Activated T-helper 1 cell treated with anti-CD3 and anti-CD28 coated beads, Interleukin-12 subunit alpha, Interleukin-12 subunit beta, Interleukin-2, Interleukin-4 antibody, amounts not matched to agents 30 ng/mL and 10 ng/mL and 1 ng/mL, durations not matched to agents 14 hours and 24 hours and 36 hours (primary cell): ENCODE measurements at regions of chr6 and their contacts with region 1.

Region 1: DNA sequence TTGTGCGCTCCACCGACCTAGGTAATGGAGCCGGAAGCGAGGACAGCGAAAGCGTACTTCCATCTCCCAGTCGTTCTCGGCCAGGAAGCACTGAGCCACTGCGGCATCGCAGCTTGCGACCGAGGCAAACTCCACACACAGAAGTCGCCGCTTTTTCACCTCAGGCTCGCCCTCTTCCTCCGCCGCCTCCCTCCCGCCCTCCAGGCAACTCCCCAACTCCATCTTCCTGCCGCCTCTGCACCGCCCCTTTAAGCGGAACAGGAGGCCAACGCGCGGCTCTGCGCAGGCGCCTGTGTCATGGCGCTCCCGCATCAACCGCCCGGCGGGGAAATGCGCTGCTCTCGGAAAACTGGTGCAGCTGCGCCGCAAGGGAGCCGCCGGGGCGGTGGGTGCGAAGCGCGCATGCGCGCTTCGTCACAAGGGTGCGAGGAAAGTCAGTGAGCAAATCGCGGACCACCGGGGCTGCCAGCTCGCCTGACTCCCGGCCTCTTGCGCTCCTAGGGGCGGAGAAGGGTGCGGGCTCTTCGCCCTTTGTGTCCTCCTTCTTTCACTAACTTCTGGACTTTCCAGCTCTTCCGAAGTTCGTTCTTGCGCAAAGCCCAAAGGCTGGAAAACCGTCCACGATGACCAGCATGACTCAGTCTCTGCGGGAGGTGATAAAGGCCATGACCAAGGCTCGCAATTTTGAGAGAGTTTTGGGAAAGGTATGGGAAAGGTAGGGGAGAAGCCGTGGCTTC is at the starts of genes ACOT13 and TDP2:
- DNase-seq: peak; percentile 97
- H3K4me3 Mint-ChIP-seq: peak within 1 kb of the TSS; percentile 92
- H3K27ac Mint-ChIP-seq: peak within 1 kb of the TSS; percentile 99
- H3K4me1 Mint-ChIP-seq: peaks cover 61% of the 10 kb centered on the region
- H3K27me3 Mint-ChIP-seq: no peaks in the 10 kb centered on the region
- total RNA-seq, gene ACOT13: 27.0 and 27.4 TPM in 2 replicates
- total RNA-seq, gene TDP2: 46.1 and 47.4 TPM in 2 replicates

Region 2: DNA sequence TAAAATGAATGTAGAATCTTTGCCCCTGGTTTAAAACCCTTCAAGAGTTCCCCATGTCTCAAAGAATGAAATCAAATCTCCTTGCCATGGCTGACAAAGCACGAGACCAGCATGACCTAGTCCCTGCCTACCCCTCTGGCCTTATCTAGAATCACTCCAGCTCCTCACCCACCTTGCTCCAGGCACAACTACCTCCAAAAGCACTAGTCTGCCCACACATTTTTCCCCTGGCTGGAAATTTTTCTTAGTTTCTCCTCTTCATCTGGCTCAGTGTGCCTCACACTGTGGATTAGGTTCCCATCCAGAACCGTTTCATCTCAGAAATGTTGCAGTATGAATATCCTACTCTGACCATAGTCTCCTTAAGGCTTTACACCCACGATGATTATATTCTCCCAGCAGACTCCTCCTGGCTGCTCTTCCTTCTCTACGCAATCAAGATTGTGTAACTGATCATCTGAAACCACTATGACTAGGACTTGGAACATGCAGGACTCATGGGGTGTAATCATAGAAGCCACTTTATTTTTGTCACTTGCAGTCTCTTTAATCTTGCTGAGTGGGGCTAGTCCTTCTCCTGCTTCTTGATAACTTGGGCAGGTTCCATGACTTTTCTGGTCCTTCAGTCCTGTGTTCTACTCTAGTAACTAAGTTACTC is 271.9 kb before region 1 on chr6:
- intact Hi-C with region 1: no loop called
- DNase-seq: no peak
- H3K4me3 Mint-ChIP-seq: no peak overlapping the region
- H3K27ac Mint-ChIP-seq: no peak overlapping the region
- H3K4me1 Mint-ChIP-seq: no peaks in the 10 kb centered on the region
- H3K27me3 Mint-ChIP-seq: peaks cover 12% of the 10 kb centered on the region

Region 3: DNA sequence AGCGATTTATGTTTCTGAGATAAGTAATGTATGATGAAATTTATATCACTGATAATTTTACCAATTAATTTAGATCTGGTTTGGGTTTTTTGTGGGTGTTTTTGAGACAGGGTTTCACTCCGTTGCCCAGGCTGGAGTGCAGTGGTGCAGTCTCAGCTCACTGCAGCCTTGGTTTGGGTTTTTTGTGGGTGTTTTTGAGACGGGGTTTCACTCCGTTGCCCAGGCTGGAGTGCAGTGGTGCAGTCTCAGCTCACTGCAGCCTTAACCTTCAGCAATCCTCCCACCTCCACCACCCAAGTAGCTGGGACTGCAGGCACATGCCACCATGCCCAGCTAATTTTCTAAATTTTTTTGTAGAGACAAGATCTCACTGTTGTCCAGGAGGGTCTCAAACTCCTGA is 251.1 kb before region 1 on chr6:
- intact Hi-C with region 1: no loop called
- DNase-seq: no peak
- H3K4me3 Mint-ChIP-seq: no peak overlapping the region
- H3K27ac Mint-ChIP-seq: no peak overlapping the region
- H3K4me1 Mint-ChIP-seq: no peaks in the 10 kb centered on the region
- H3K27me3 Mint-ChIP-seq: no peaks in the 10 kb centered on the region

Region 4: GRCh38 chr6:24646782-24647181 is 20.0 kb before region 1 on chr6:
- intact Hi-C with region 1: loop called (anchors 1 kb)
- DNase-seq: no peak
- H3K4me3 Mint-ChIP-seq: peak overlapping the region; percentile 86
- H3K27ac Mint-ChIP-seq: peak overlapping the region; percentile 72
- H3K4me1 Mint-ChIP-seq: peaks cover 18% of the 10 kb centered on the region
- H3K27me3 Mint-ChIP-seq: peaks cover 20% of the 10 kb centered on the region

Region 5: DNA sequence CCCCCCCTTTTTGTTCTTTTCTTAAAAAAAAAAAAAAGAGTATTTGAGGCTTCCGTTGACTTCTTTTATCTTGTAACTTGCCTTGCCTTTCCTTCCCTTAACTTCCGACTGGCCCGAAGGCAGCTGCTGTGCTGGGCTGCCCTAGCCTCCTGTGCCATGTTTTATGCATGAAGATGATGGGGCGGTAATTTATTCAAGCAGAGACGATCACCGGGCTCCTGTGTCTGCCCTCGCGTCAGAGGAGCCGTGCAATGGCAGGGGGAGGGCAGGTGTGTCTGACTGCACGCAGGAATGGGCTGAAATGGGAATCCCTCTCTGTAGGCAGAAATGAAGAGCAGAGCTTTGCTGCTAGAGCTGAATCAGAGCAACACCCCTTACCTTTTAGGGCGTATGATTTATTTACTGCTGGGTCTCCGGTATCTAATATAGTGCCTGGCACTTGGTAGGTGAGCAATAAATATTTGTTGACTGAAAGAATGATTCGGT is 375.3 kb after region 1 on chr6:
- intact Hi-C with region 1: no loop called
- DNase-seq: peak; percentile 30
- H3K4me3 Mint-ChIP-seq: peak overlapping the region; percentile 88
- H3K27ac Mint-ChIP-seq: peak overlapping the region; percentile 95
- H3K4me1 Mint-ChIP-seq: peaks cover 66% of the 10 kb centered on the region
- H3K27me3 Mint-ChIP-seq: no peaks in the 10 kb centered on the region